ENCODE measurements at regions of chr6 and their contacts with region 1.

Region 1: DNA sequence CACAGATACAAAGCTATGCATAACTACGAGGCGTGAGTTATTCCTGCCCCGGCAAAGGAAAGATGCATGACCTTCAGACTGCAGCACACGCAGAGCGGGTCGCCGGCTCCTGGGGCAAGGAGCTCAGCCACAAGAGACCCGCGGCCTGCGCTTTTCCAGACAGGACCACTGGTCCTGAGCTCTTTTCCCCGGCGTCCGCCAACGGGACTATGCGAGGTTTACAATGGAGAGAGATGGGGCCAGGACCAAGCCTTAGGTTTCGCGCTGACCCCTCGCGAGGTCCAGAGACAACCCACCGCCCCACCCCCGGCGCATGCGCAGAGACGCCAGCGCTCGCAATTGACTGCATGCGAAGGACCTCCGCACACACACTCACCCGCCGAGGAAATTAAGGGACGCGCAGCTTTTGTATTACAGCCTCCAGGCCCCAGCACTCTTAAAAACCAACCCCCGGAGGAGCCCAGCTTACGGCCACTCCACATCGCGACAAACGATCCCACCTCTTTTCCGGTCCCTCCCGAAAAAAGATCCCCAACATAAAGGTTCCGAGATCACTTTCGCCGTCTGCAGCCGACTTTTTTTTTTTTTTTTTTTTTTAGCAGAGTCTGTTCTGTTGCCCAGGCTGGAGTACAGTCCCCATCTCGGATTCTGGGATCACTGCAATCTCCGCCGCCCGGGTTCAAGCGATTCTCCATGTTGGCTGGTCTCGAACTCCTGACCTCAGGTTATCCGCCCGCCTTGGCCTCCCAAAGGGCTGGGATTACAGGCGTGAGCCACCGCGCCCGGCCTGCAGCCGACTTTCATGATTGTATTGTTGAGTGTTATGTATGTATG is at the start of gene COQ3:
- DNase-seq: peak; percentile 66
- H3K4me3 Mint-ChIP-seq: peak within 1 kb of the TSS; percentile 91
- H3K27ac Mint-ChIP-seq: peak within 1 kb of the TSS; percentile 91
- H3K4me1 Mint-ChIP-seq: peaks cover 13% of the 10 kb centered on the region
- H3K27me3 Mint-ChIP-seq: no peaks in the 10 kb centered on the region
- total RNA-seq, gene COQ3: 17.4 to 17.7 TPM

Region 2: GRCh38 chr6:99415446-99415845 is 21.5 kb after region 1 on chr6:
- CTCF ChIA-PET with region 1: interaction called, 3 read pairs
- intact Hi-C with region 1: loop called (anchors 2 kb)
- DNase-seq: no peak
- H3K4me3 Mint-ChIP-seq: no peak overlapping the region
- H3K27ac Mint-ChIP-seq: no peak overlapping the region
- H3K4me1 Mint-ChIP-seq: peaks cover 54% of the 10 kb centered on the region
- H3K27me3 Mint-ChIP-seq: no peaks in the 10 kb centered on the region

Measured in activated naive CD4-positive, alpha-beta T cell treated with anti-CD3 and anti-CD28 coated beads for 36 hours (primary cell).